Activated T-helper 2 cell treated with anti-CD3 and anti-CD28 coated beads, Interferon-gamma antibody, Interleukin-2, Interleukin-4, amounts not matched to agents 10 μg/mL and 5 μg/mL and 100 μg/mL, durations not matched to agents 14 hours and 24 hours and 36 hours (primary cell): ENCODE measurements at regions of chr11 and their contacts with region 1.

Region 1: GRCh38 chr11:64778508-64779346 is at the start of gene SF1:
- DNase-seq: peak; percentile 100
- H3K4me3 Mint-ChIP-seq: peak within 1 kb of the TSS; percentile 89
- H3K27ac Mint-ChIP-seq: peak within 1 kb of the TSS; percentile 99
- H3K4me1 Mint-ChIP-seq: peaks cover 46% of the 10 kb centered on the region
- H3K27me3 Mint-ChIP-seq: no peaks in the 10 kb centered on the region
- total RNA-seq, gene SF1: 460 and 461 TPM in 2 replicates

Region 2: DNA sequence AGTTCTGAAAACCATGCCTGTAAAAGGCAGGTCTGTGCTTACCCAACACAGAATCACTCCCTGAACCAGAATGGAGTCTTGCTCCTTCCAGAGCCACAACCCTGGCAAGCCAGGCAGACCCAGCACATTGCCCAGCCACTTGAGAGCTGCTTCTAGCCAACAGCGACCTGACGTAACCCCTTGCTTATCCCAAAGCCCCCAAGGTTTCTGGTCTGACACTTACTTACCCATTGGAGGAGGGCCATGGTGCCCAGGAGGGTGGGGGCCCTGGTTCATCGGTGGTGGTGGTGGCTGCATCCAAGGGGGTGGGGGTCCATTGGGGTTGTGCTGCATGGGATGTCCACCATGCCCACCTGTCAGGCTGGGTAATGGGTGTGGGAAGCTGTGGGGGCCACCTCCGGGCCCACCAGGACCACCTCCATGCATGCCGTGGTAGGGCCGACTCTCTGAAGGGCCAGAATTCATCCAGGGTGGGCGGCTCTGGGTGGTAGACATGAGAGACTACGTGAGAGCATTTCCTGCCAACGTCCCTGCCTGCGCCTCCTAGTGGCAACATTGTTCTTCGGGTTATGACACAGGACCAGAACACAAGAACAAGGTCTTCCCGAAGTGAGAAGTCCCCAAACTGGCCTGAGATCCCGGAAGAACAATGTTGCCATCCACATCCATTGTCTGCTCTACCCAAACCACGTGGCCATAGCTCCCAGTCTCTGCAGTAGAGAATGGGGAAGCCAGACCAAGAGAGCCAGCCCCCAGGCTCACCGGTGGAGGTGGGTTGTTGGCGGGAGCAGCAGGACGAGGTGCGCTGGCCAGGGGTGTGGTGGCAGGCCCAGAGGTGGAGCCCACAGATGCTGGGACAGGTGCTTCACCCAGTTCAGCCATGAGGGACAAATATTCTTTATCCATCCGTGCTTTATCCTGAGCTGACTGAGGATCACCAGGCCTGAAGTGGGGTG is 11.1 kb before region 1 on chr11:
- intact Hi-C with region 1: loop called (anchors 1 kb)
- DNase-seq: peak; percentile 66
- H3K4me3 Mint-ChIP-seq: no peak overlapping the region
- H3K27ac Mint-ChIP-seq: peak overlapping the region; percentile 66
- H3K4me1 Mint-ChIP-seq: peaks cover 68% of the 10 kb centered on the region
- H3K27me3 Mint-ChIP-seq: no peaks in the 10 kb centered on the region

Region 3: GRCh38 chr11:64803163-64803845 is 24.6 kb after region 1 on chr11 and contains the start of gene MAP4K2:
- intact Hi-C with region 1: loop called (anchors 2 kb)
- DNase-seq: peak; percentile 86
- H3K4me3 Mint-ChIP-seq: peak within 1 kb of the TSS; percentile 86
- H3K27ac Mint-ChIP-seq: peak within 1 kb of the TSS; percentile 89
- H3K4me1 Mint-ChIP-seq: peaks cover 17% of the 10 kb centered on the region
- H3K27me3 Mint-ChIP-seq: no peaks in the 10 kb centered on the region
- total RNA-seq, gene MAP4K2: 72.1 and 77.5 TPM in 2 replicates

Region 4: DNA sequence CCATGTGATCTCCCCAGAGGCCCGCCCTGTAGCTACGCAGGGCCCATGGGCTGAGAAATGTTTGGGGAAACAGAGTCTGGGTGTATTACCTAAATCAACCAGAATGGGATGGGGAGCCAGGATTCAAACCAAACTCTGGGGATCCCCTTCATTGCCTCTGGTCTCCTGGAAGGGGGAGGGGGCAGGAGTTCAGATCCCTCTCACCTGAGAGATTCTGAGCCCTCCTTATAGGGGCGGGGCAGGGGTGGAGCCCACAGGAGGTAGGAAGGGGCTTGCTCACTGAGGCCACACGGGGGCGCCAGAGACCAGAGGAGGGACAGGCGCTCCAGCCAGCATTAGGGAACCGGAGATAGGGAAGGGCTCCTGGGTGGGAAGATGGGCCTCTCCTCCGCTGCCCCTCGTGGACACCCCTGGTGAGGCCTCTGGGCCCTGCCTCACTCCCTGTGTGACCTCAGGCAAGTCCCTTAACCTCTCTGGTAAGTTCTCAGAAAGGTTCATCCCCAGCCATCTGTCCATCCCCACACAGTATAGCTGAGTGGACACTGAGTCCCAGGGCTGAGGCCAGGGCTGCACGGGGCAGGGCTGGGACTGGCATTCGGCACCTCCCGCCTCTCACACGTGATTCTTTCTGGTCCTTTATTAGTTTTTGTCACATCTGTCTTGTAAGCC is 68.4 kb after region 1 on chr11:
- intact Hi-C with region 1: no loop called
- DNase-seq: peak; percentile 81
- H3K4me3 Mint-ChIP-seq: no peak overlapping the region
- H3K27ac Mint-ChIP-seq: no peak overlapping the region
- H3K4me1 Mint-ChIP-seq: peaks cover 36% of the 10 kb centered on the region
- H3K27me3 Mint-ChIP-seq: no peaks in the 10 kb centered on the region